ENCODE measurements at regions of chr16 and their contacts with region 1.

Region 1: DNA sequence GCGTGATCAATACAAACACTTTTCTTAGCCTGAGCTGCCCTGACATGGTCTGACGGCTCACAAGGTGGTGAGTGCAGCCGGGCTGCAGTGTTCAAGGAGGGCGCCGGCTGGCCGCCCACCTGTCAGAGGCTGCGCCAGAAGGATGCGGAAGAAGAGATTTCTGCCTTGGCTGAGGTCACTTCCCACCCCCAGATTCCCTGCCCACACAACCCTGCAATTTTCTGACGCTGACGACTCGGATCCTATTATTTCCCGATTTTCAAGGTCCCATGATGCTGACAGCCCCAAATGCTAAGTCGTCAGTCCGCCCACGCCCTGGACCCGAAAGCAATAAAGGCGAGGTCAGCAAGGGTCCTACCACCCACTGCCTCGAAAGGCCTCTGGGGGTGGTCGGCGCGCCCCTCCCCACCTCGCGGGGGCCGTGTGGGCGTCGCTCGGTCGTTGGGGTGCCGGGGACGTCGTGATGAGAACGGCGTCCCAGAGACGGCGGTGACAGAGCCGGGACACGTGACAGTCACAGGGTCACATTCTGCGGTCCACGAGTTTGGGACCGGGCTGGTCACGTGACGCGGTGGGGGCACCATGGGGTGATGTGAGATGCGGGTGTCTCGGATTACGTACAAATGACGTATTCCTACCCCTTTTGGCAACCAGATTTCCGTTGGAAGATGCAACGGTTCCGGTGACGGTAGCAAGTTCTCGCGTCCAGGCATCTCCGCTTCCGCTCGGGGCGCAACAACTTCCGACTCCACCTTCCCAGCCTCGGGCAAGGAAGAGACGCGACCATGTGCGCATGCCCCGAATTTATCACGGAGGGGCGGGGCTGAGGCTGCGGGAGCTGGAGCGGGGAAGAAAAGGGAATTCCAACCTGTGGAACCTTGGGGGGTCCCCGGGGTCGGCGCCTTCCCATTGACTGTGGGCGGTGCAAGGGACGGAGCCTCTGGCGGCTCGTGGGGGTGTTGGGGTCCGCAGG is at the start of gene STX4:
- DNase-seq: peak; percentile 97 to 99 (median 98)
- H3K4me3 ChIP-seq: peak within 1 kb of the TSS; percentile 98
- H3K4me3 Mint-ChIP-seq: peak within 1 kb of the TSS; percentile 91 to 100 (median 96)
- H3K27ac ChIP-seq: peak within 1 kb of the TSS; percentile 94
- H3K27ac Mint-ChIP-seq: peak within 1 kb of the TSS; percentile 91 to 99 (median 98)
- H3K4me1 ChIP-seq: peaks cover 19% of the 10 kb centered on the region
- H3K4me1 Mint-ChIP-seq: peaks cover 17 to 40% (median 27%) of the 10 kb centered on the region in 3 donors
- H3K27me3 ChIP-seq: no peaks in the 10 kb centered on the region
- H3K27me3 Mint-ChIP-seq: no peaks in the 10 kb centered on the region
- total RNA-seq, gene STX4: 53.0 to 55.0 TPM

Region 2: DNA sequence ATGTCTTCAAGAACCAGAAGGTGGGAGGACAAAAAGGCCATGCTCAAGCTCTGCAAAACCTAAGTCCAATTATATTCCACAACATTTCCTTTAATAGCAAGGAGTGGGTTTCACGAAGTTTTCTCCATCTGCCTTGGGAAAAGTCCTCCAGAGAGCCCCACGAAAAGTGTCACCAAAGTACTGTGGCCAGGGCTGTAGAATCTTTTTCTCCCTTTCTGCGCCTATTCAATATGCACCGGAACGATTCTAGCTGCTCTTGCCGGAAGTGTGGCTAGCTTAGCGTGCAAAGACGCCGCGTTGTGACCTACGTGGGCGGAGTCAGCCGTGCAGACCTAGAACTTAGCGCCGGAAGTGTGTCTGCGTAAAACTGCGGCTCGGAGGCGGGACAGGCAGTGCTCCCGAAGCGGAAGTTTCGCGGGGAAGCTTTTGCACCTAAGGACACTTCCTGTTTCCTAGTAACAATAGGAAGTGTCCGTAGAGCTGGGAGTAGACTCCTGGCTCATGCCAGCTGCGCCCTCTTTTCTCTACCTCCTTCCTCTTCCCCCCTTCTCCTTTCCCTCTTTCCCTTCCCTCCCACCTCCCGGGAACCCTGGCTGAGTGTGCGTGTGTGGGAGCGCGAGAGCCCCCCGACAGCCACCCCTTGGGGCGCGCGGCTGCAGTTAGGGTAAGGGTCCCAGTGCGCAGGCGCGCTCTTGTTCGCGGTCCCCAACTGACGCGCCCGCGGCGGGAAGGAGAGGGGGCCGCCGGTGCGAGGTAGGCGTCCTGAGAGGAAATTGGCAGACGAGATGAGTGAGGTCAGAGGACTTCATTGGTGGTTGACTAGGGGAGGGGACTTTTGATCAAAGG is 41.2 kb after region 1 on chr16 and contains the starts of genes ZNF646 and ZNF668:
- CTCF ChIA-PET with region 1: interaction called, 3 read pairs
- POLR2A ChIA-PET with region 1: interaction called, 18 read pairs
- DNase-seq: peak; percentile 96 to 99 (median 97)
- H3K4me3 ChIP-seq: peak within 1 kb of the TSS; percentile 100
- H3K4me3 Mint-ChIP-seq: peak within 1 kb of the TSS; percentile 87 to 97 (median 97)
- H3K27ac ChIP-seq: peak within 1 kb of the TSS; percentile 89
- H3K27ac Mint-ChIP-seq: peak within 1 kb of the TSS; percentile 89 to 100 (median 98)
- H3K4me1 ChIP-seq: peaks cover 24% of the 10 kb centered on the region
- H3K4me1 Mint-ChIP-seq: peaks cover 37 to 55% (median 41%) of the 10 kb centered on the region in 3 donors
- H3K27me3 ChIP-seq: no peaks in the 10 kb centered on the region
- H3K27me3 Mint-ChIP-seq: peaks cover 0 to 3% of the 10 kb centered on the region in 2 donors
- total RNA-seq, gene ZNF646: 23.4 to 25.9 TPM
- total RNA-seq, gene ZNF668: 15.9 to 20.5 TPM